AG04450 (cell line): ENCODE measurements at regions of chr1 and their contacts with region 1.

Region 1: GRCh38 chr1:18926315-18927081 is 24.1 kb upstream of the ALDH4A1 start:
- DNase-seq: peak; percentile 71
- H3K4me3 ChIP-seq: peak overlapping the region; percentile 32
- H3K27ac ChIP-seq: peak overlapping the region; percentile 96
- H3K27me3 ChIP-seq: no peaks in the 10 kb centered on the region
- CTCF ChIP-seq: no peak

Region 2: DNA sequence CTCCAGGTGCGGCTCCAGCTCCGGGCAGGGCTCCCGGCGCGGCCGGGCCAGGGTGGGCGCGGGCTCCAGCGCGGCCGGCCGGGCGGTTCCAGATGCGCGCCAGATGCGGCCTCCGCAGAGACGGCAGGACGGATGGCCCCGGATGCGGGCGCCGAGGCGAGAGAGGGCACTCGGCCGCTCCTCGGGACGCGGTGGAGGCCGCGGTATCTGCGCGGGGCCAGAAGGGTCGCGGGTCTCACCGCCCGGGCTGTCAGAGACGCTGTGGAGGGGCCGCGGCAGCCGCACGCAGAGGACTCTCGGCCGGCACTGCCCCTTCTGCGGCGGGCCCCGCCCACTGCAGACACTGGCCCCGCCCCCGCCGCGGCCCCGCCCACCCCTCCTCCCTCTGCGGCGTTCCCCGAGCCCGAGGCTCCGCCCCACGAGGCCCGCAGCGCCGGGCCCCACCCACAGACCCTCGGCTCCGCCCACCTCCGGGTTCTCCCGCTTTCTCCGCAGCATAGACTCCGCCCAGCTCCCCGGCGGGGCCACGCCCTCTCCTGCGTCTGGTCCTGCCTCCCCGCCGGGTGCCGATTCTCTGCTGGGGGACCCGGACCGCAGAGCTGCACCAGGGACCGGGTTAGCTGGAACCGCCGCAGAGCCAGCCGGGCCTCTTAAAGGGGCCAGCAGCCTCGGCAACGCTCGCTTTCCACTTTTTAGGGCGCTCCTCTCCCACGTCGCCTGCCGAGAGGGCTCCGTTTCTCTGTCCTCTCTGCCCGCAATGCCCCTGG is 30.1 kb after region 1 on chr1 and contains the start of gene IFFO2:
- CTCF ChIA-PET with region 1: no interaction called
- POLR2A ChIA-PET with region 1: interaction called, 10 read pairs
- DNase-seq: peak; percentile 81
- H3K4me3 ChIP-seq: peak within 1 kb of the TSS; percentile 73
- H3K27ac ChIP-seq: peak within 1 kb of the TSS; percentile 21
- H3K27me3 ChIP-seq: peaks cover 11% of the 10 kb centered on the region
- CTCF ChIP-seq: no peak
- polyA plus RNA-seq, gene IFFO2: 6.8 and 7.8 TPM in 2 replicates